ENCODE measurements at regions of chr22 and their contacts with region 1.

Region 1: DNA sequence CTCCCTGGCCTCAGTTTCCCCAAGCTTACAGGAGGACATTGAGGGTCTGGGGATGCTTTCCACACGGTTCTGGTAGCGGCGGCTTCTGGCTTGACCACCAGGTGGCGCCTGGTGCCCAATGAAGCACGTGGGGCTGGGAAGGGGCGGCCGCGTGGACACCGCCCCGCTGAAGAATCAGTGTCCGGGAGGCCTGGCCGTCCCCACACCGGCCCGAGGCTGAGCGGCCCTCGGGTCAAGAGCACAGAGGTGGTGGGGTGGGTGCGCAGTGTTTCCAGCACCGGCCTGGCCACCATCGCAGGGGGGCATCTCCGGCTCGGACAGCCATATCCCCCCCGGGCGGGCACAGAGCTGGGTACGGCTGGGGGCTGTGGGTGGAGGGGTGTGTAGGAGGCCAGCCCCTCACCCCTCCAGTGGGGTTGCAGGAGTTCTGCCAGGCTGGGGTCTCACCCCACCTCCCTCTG is 27.8 kb upstream of the PPARA start:
- DNase-seq: peak in 1 of 2 experiments; percentile 65
- H3K4me3 ChIP-seq: no peak overlapping the region
- H3K27ac ChIP-seq: no peak overlapping the region
- H3K4me1 ChIP-seq: no peaks in the 10 kb centered on the region
- H3K27me3 ChIP-seq: no peaks in the 10 kb centered on the region
- CTCF ChIP-seq: peak; percentile 99

Region 2: GRCh38 chr22:46150034-46150654 is 27.6 kb after region 1 on chr22 and contains the start of gene PPARA:
- CTCF ChIA-PET with region 1: no interaction called
- POLR2A ChIA-PET with region 1: no interaction called
- intact Hi-C with region 1: no loop called
- DNase-seq: peak; percentile 45 to 94
- H3K4me3 ChIP-seq: peak within 1 kb of the TSS; percentile 90
- H3K27ac ChIP-seq: no peak within 1 kb of the TSS
- H3K4me1 ChIP-seq: peaks cover 20% of the 10 kb centered on the region
- H3K27me3 ChIP-seq: peaks cover 7% of the 10 kb centered on the region; the same call in 1 of the 2 replicates
- CTCF ChIP-seq: no peak
- total RNA-seq, gene PPARA: 43.9 and 48.7 TPM in 2 replicates

Region 3: GRCh38 chr22:46296257-46297150 is 174.0 kb after region 1 on chr22 and contains the start of gene GTSE1:
- CTCF ChIA-PET with region 1: no interaction called
- POLR2A ChIA-PET with region 1: no interaction called
- intact Hi-C with region 1: loop called (anchors 1 kb)
- DNase-seq: peak; percentile 94 to 96
- H3K4me3 ChIP-seq: peak within 1 kb of the TSS; percentile 73
- H3K27ac ChIP-seq: peak within 1 kb of the TSS; percentile 52
- H3K4me1 ChIP-seq: peaks cover 20% of the 10 kb centered on the region
- H3K27me3 ChIP-seq: no peaks in the 10 kb centered on the region
- CTCF ChIP-seq: no peak
- total RNA-seq, gene GTSE1: 51.5 and 64.6 TPM in 2 replicates

Region 4: GRCh38 chr22:46309526-46310085 is 187.1 kb after region 1 on chr22:
- CTCF ChIA-PET with region 1: interaction called, 4 read pairs
- POLR2A ChIA-PET with region 1: no interaction called
- intact Hi-C with region 1: loop called (anchors 1 kb)
- DNase-seq: no peak
- H3K4me3 ChIP-seq: no peak overlapping the region
- H3K27ac ChIP-seq: no peak overlapping the region
- H3K4me1 ChIP-seq: no peaks in the 10 kb centered on the region
- H3K27me3 ChIP-seq: no peaks in the 10 kb centered on the region
- CTCF ChIP-seq: no peak

Region 5: DNA sequence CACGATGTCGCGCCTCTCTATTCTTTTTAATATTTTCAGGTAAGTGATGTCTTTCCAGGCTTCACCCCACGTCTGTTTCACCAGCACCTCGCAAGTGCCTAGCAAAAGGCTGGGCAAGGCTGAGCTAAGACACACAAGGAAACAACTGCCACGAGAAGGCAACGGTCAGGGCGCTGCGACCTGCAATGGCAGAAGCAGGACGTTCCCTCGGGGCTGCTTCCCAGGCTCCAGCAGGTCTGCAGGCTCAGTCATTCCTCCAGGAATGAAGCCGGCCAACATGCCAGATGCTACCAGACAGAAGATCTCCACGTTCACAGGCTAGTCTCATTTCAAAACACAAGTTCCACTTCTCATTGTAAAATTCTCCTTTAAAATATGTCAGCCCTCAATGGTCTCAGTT is 369.4 kb after region 1 on chr22:
- CTCF ChIA-PET with region 1: interaction called, 12 read pairs
- POLR2A ChIA-PET with region 1: no interaction called
- intact Hi-C with region 1: no loop called
- DNase-seq: peak in 1 of 2 experiments; percentile 44
- H3K4me3 ChIP-seq: no peak overlapping the region
- H3K27ac ChIP-seq: no peak overlapping the region
- H3K4me1 ChIP-seq: no peaks in the 10 kb centered on the region
- H3K27me3 ChIP-seq: no peaks in the 10 kb centered on the region
- CTCF ChIP-seq: no peak

Measured in PC-9 (cell line).